ENCODE measurements at regions of chr6 and their contacts with region 1.

Region 1: DNA sequence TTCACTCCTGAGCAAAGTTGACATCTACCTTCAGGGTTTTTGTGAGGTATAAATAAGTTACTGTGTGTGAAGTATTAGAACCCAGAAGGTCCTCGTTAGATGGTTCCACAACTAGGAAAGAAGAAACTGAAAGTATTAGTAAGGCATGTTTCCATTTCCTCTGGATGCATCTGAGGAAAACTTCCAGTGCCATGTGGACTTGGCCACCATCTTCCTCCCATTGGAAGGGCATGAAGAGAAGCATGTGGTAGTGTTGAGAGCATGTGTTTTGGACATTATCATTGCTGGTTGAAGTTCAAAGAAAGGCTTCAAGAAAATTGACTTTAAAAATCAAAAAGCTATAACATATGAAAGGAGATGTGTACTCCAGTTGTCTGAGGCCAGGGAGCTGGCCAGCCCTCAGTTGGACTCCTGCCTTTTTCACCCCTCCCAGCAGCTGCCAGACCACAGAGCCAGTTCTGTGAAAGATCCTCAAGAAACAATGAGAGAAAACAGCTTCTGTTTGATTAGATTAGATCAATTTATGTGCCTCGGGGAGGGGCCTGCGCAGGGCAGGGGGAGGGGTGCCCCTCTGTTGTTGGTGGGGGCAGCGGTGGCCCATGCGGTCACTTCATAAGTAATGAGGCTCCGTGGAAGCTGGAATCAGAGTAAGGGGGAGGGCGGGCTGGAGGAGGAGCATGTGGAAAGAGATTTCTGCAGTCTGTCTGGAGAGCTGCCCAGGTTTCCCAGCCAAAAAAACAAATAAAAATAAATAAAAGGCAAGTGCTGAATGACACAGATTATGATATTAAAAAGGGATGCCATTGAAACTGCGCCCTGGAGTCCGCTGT is 154.0 kb downstream of the JARID2 start:
- DNase-seq: peak; percentile 87
- H3K4me3 ChIP-seq: peak overlapping the region in 1 of 3 experiments; percentile 27
- H3K27ac ChIP-seq: no peak overlapping the region
- H3K4me1 ChIP-seq: peaks cover 5% of the 10 kb centered on the region
- H3K27me3 ChIP-seq: no peaks in the 10 kb centered on the region
- CTCF ChIP-seq: no peak
- POLR2A ChIP-seq: no peak

Region 2: DNA sequence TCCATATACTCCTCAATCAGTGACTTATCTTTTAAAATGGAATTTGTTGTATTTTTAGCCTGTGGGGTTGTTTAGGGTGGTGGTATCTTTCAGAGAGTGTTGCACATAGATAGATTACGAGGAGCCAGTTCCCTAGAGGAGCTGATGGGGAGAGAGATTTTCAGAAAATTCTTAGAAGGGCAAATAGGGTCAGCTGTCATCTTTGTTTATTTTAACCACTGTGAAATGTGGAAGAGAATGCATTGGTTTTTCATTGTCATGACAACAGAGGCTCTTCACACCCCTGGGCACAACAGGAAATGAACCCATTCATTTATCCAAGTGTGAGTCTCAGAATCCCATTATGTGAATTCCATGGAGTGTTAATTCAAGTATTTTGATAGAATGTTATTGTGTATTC is 34.4 kb after region 1 on chr6:
- CTCF ChIA-PET with region 1: no interaction called
- POLR2A ChIA-PET with region 1: interaction called, 3 read pairs
- dilution Hi-C with region 1: no loop called
- intact Hi-C with region 1: loop called (anchors 2 kb)
- DNase-seq: no peak
- H3K4me3 ChIP-seq: no peak overlapping the region
- H3K27ac ChIP-seq: no peak overlapping the region
- H3K4me1 ChIP-seq: peaks cover 37% of the 10 kb centered on the region
- H3K27me3 ChIP-seq: no peaks in the 10 kb centered on the region
- CTCF ChIP-seq: no peak
- POLR2A ChIP-seq: no peak

Region 3: DNA sequence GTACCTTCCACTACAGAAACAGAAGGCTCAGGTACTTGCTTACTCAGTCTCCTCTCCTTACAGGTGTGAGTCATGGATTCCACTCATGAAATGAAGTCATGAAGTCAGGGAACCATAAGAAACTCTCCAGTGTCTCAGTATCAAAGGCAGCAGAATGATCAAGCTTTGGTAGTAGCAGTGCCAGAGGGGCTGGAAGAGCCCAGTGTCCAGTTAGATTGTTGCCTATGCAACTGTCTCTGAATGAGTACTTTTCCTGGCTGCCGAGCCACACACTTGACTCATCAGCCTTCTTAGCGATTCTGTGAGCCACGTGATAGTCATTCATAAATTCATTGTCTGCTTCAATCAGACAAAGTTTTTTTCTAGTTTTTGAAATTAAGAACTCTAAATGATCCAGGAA is 315.2 kb after region 1 on chr6:
- CTCF ChIA-PET with region 1: no interaction called
- POLR2A ChIA-PET with region 1: no interaction called
- dilution Hi-C with region 1: no loop called
- intact Hi-C with region 1: no loop called
- DNase-seq: no peak
- H3K4me3 ChIP-seq: no peak overlapping the region
- H3K27ac ChIP-seq: no peak overlapping the region
- H3K4me1 ChIP-seq: no peaks in the 10 kb centered on the region
- H3K27me3 ChIP-seq: no peaks in the 10 kb centered on the region
- CTCF ChIP-seq: no peak
- POLR2A ChIP-seq: no peak